ENCODE measurements at regions of chr4 and their contacts with region 1.

Region 1: DNA sequence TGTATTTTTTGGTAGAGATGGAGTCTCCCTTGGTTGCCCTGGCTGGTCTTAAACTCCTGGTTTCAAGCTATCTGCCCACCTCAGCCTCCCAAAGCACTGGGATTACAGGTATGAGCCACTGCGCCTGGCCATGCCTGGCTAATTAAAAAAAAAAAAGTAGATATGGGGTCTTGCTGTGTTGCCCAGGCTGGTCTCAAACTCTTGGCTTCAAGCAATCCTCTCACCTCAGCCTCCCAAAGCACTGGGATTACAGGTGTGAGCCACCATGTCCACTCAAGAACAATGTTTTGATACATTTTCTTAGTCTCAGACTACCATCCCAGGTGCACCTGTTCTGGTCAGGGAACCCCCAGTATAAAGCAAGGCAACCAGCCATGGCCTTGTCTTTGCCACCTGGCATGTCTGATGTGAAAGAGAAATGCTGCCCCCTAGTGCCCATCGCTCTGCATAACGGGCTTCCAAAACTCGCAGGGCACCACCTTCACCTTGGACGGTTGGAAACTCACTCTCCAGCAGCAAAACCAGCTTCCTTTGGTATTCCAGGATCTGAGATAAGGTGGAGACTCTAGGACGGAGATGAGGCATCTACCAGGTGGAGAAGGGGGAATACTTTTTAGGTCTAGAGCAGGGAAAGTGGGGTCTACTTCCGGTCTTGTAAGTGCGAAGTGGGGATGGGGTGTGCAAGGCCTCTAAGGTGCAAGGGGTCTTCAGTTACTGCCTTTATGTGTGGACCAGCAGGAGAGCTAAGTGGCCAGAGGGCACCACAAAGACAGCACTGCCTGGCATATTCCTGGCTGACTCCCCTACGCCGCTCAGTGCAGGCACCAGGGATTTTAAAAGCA is 47.7 kb upstream of the AFAP1 start:
- DNase-seq: peak; percentile 68
- H3K4me3 ChIP-seq: no peak overlapping the region
- H3K27ac ChIP-seq: no peak overlapping the region
- H3K4me1 ChIP-seq: no peaks in the 10 kb centered on the region
- H3K27me3 ChIP-seq: no peaks in the 10 kb centered on the region
- CTCF ChIP-seq: peak; percentile 79 to 90 (median 83)
- POLR2A ChIP-seq: no peak

Region 2: GRCh38 chr4:7761720-7762119 is 225.6 kb before region 1 on chr4:
- intact Hi-C with region 1: loop called (anchors 5 kb)
- DNase-seq: no peak
- H3K4me3 ChIP-seq: no peak overlapping the region
- H3K27ac ChIP-seq: no peak overlapping the region
- H3K4me1 ChIP-seq: peaks cover 7% of the 10 kb centered on the region
- H3K27me3 ChIP-seq: no peaks in the 10 kb centered on the region
- CTCF ChIP-seq: peak; percentile 42 to 65 (median 55)
- POLR2A ChIP-seq: no peak

Region 3: DNA sequence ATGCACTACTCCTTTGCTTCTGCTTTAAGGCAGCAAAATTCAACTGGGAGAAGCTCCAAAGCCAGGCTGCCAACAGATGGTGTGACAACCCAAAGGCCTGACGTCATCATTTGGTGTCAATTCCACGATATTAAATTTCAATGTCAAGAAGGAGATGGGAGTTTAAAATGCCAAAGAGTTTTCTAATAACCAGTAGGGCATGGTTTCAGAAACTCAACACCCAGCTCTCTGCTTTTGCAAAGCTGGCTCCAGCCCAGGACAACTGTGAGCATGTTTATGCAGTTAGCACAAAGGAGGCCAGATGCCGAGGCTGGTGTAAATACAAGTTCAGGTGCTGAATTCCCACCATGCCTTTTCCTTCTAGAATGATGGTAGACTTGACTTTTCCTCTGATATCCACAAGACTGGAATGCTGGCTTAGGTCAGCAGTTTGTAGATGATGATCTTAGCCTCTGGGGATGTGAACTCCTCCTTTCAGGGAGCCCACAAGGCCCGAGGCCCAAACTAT is 115.1 kb before region 1 on chr4:
- intact Hi-C with region 1: loop called (anchors 5 kb)
- DNase-seq: peak; percentile 78
- H3K4me3 ChIP-seq: no peak overlapping the region
- H3K27ac ChIP-seq: peak overlapping the region; percentile 35 to 39
- H3K4me1 ChIP-seq: no peaks in the 10 kb centered on the region
- H3K27me3 ChIP-seq: no peaks in the 10 kb centered on the region
- CTCF ChIP-seq: no peak
- POLR2A ChIP-seq: no peak

Region 4: GRCh38 chr4:7939377-7940108 is 47.8 kb before region 1 on chr4 and contains the start of gene AFAP1:
- intact Hi-C with region 1: loop called (anchors 5 kb)
- DNase-seq: peak; percentile 84
- H3K4me3 ChIP-seq: peak within 1 kb of the TSS; percentile 90 to 95
- H3K27ac ChIP-seq: peak within 1 kb of the TSS; percentile 85 to 86
- H3K4me1 ChIP-seq: no peaks in the 10 kb centered on the region
- H3K27me3 ChIP-seq: no peaks in the 10 kb centered on the region
- CTCF ChIP-seq: no peak
- POLR2A ChIP-seq: peak; percentile 83
- total RNA-seq, gene AFAP1: 17.5 to 19.8 TPM

Measured in prostate gland (tissue), 2 donors.